Right ventricle myocardium inferior (tissue), 1 donor: ENCODE measurements at regions of chr12 and their contacts with region 1.

Region 1: DNA sequence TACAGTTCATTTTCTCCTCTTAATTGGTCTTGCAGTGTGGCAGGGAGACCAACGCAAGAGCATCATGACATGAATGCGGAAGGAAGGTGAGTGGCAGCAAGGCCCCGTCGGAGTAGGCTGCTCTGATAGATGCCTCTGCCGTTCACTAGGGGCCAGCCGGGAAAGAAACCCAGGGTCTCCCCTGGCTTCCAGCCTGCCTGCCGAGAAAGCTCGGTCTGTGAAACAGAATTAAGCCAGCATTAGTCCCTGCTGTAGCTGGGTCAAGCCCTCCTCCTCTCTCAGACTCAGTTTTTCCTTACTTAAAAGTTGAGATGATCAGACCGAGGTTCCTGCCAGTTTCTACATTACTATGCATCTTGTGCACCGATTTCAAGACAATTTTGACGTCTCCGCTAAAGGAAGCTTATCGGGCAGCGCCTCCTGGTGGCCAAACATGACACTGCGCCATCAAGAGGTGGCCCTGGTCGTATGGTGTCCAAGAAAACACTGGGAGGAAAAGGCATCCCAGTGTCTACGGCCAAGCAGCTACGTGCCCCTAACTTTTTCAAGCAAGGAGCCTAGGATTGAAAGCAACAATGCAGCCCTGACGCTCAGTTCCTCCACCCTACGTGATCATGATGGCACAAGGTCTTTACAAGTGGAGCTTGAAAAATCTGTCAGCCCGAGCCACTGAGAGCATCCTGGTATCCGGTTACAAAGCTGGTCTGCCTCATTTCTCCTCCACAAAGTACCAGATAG is 131.6 kb downstream of the KSR2 start:
- DNase-seq: peak; percentile 82
- ATAC-seq: peak; percentile 52

Region 2: DNA sequence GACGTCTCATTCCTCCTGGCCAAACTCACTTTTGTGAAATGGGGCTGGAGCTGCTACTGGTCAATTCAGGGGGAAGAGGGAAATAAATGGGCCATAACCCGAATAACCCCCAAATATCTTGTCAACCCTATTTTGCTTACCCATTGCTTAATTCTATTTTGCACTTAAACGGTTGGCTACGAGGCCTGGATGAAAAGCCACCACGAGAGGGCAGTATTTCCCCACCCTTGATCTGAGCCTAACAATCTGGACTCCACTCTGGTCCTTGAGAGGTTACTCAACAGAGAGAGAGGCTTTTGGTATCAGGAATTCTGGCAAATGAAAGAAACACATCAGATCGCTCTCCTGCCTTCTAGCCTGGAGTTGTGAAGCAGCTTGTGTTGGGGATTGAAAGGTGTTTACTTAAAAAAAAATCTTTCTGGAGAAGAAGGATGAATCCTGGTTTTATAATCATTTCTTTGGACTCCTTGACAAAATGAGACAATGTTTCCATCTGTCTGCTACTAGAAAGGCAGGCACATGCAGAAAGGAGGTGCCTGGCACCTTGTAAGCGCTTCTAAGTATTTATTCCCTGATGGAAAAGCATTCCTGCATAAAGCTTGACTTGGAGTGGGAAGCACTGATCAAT is 624.5 kb before region 1 on chr12:
- intact Hi-C with region 1: loop called (anchors 1 kb)
- DNase-seq: no peak
- ATAC-seq: peak; percentile 77

Region 3: DNA sequence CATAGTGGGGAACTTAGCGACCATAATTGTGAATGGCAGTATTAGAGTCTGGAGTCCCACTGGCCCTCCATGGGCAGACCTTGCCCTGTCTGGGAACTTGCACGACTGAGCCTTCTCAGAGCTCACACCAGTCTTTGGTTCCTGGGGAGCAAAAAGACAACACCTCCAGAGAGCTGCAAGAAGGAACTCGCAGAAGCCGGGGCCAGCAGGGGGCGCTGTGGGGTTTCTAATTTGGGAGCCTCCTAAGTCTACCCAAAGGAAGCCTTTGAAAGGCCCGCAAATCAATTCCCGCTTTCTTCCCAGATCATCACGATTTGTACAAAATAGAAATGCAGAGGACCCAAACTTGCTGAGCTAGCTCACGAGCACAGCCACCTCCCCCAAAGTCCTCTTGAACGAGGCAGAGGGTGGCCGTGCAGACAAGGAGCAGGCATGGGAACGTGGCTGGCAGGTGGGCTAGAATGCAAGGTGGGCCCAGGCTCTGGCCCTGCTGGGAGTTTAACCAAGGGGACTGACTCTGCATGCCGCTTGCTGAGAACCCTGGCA is 600.6 kb before region 1 on chr12:
- intact Hi-C with region 1: loop called (anchors 2 kb)
- DNase-seq: peak; percentile 86
- ATAC-seq: peak; percentile 42

Region 4: DNA sequence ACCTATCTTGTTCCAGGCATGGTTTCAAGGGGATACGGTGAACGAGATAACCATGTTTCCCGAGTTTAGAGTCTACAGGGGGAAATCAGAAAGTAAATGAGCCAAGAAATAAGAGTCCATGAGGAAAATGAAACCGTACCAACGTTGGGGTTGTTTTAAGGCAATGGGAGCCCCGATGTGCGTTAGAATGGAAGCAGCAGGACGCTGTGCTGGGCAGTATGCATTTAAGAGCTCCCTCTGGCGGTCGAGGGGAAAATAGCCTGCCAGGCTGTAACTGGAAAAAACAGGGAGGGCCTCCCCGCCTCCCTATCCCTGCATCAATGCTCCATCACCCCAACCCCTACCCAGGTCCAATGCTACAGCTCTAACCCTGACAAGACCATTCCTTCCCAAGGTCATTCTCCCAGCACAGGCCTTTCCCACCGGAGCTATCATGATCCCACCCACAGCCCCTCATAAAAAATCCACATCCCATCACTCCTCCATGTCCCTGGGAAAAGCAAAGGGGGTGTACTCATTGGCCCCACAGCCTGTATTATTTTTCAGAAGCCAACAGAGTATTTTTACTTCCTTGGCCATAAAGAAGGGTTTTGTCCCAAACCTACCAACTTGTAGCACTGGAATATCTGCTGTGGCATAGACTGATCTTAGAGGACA is 249.4 kb before region 1 on chr12:
- intact Hi-C with region 1: loop called (anchors 5 kb)
- DNase-seq: peak; percentile 72
- ATAC-seq: peak; percentile 46

Region 5: GRCh38 chr12:117936722-117937484 is 99.7 kb after region 1 on chr12:
- intact Hi-C with region 1: no loop called
- DNase-seq: no peak
- ATAC-seq: no peak